Left cardiac atrium (tissue), 4 donors: ENCODE measurements at regions of chr5 and their contacts with region 1.

Region 1: GRCh38 chr5:42767491-42768105 is 11.0 kb downstream of the CCDC152 start:
- DNase-seq: no peak
- ATAC-seq: peak; percentile 27 to 40

Region 2: GRCh38 chr5:42005561-42006153 is 761.9 kb before region 1 on chr5:
- intact Hi-C with region 1: loop called in 1 of 2 experiments (anchors 10 kb)
- DNase-seq: no peak
- ATAC-seq: no peak

Region 3: GRCh38 chr5:42057254-42057690 is 710.3 kb before region 1 on chr5:
- intact Hi-C with region 1: loop called (anchors 10 kb)
- DNase-seq: no peak
- ATAC-seq: peak in 1 of 2 donors; percentile 44

Region 4: DNA sequence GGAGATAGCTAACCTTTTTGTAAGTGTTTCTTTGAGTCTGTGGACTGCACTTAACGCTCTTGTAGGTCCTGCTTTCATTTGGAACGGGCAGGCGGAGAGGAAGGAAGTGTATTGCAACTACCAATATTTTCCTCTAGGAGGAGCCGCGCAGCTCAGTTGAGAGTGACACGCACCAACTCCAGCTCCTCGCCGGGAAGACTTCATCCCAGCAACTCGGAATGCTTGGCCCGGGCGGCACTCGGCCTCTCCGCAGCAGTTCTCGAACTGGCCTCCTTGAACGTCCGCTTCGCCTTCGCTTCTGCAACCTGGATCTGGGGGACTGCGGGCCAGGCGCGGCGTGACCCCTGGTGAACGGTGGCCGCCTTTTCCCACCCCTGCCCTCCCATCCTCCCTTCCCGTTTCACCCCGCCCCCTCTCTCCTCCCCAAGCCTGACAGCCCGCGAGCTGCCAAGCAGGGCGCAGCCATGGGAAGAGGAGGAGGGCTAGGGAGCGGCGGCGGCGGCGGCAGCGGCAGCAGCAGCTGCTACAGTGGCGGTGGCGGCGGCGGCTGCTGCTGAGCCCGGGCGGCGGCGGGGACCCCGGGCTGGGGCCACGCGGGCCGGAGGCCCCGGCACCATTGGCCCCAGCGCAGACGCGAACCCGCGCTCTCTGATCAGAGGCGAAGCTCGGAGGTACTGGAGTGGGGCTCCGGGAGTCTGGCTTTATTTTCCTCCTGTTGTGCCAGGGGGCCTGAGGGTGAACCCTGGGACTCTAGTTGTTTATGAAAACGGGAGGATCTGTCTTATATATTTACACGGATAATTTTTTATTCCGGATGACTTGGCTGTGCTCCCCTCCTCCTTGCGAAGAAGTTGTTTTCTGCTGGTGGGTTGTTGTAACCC is 344.1 kb before region 1 on chr5 and contains the start of gene GHR:
- intact Hi-C with region 1: loop called in 1 of 2 experiments (anchors 5 kb)
- DNase-seq: peak; percentile 86
- ATAC-seq: peak; percentile 93 to 94
- total RNA-seq, gene GHR: 15.2 to 22.4 TPM

Region 5: GRCh38 chr5:42807722-42808447 is 40.3 kb after region 1 on chr5:
- intact Hi-C with region 1: no loop called
- DNase-seq: no peak
- ATAC-seq: peak in 1 of 2 donors; percentile 25

Region 6: GRCh38 chr5:42889311-42889933 is 121.8 kb after region 1 on chr5:
- intact Hi-C with region 1: loop called in 1 of 2 experiments (anchors 5 kb)
- DNase-seq: peak; percentile 73
- ATAC-seq: peak; percentile 90 to 92